ENCODE measurements at regions of chr3 and their contacts with region 1.

Region 1: DNA sequence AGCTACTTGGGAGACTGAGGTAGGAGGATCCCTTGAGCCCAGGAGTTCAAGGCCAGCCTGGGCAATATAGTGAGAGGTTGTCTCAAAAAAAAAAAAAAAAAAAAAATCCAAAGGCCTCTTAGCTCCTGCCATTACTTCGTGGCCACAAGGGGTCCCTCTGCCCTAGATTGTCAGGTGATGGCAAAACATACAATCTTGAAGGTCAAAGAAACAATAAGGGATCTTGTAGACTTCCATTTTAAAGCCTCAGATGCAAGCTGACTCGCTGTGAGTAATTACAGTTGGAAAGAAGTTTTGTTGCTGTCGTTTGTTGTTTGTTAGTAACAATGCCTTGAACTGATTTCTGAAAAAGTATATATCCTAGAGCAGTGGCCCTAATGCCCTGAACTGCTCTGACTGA is 55.9 kb upstream of the PLCL2 start:
- DNase-seq: peak; percentile 50
- H3K4me3 ChIP-seq: no peak overlapping the region
- H3K27ac ChIP-seq: no peak overlapping the region
- H3K4me1 ChIP-seq: no peaks in the 10 kb centered on the region
- H3K27me3 ChIP-seq: no peaks in the 10 kb centered on the region
- CTCF ChIP-seq: peak; percentile 31

Region 2: DNA sequence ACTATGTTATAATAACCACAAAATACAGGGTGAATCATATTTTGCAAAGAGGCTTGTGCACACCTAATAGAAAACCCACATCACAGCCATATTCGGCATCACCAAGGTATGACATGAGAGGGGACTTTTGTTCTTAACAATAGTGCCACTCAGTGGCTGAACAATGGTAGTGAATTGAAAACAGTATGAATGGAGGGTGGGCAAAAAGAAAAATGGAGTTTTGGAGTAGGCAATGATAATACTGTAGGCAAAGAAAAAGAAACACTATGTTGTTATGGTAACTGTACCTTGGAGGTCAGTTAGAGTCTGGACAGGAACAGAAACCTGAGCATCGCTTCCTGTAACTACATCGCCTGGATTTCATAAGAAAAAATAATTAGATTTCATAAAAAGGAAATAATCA is 404.6 kb after region 1 on chr3:
- intact Hi-C with region 1: loop called (anchors 5 kb)
- DNase-seq: no peak
- H3K4me3 ChIP-seq: no peak overlapping the region
- H3K27ac ChIP-seq: no peak overlapping the region
- H3K4me1 ChIP-seq: no peaks in the 10 kb centered on the region
- H3K27me3 ChIP-seq: no peaks in the 10 kb centered on the region
- CTCF ChIP-seq: peak; percentile 52

Region 3: DNA sequence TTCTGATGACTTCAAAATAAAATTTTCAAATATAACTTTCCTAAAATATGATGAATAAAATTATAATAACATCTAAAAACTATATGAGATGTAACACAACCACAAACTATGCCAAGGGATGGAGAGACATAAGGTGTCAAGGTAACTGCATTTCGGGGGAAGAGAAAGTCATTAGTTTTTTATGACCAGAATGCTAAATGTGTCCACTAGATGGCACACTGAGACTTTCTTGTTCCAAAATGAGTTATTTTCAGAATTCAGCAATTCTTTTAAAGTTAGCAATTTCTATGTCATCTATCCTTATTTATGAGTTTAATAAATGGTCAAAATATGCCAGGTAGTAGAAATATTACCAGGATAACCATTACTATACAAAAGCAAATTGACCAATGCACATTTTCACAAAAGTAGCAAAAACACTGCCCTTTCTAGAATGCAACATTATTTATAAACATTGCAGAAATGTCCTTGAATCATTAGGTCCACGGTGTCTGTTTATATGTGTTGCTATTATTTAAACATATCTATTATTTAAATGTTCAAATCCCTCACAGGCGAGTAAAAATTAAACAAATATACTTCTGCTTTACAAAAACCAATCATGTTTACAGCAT is 430.1 kb after region 1 on chr3:
- intact Hi-C with region 1: no loop called
- DNase-seq: no peak
- H3K4me3 ChIP-seq: no peak overlapping the region
- H3K27ac ChIP-seq: no peak overlapping the region
- H3K4me1 ChIP-seq: no peaks in the 10 kb centered on the region
- H3K27me3 ChIP-seq: no peaks in the 10 kb centered on the region
- CTCF ChIP-seq: peak; percentile 71

Measured in colonic mucosa (tissue), 4 donors.